ENCODE measurements at regions of chr2 and their contacts with region 1.

Region 1: GRCh38 chr2:31992025-31992566 is 18.7 kb downstream of the MEMO1 start:
- DNase-seq: no peak
- ATAC-seq: no peak
- H3K4me3 ChIP-seq: no peak overlapping the region
- H3K4me3 Mint-ChIP-seq: no peak overlapping the region
- H3K27ac ChIP-seq: no peak overlapping the region
- H3K27ac Mint-ChIP-seq: no peak overlapping the region
- H3K4me1 ChIP-seq: peaks cover 2 to 3% of the 10 kb centered on the region in 2 experiments
- H3K4me1 Mint-ChIP-seq: peaks cover 49 to 56% (median 56%) of the 10 kb centered on the region in 3 donors
- H3K27me3 ChIP-seq: no peaks in the 10 kb centered on the region
- H3K27me3 Mint-ChIP-seq: no peaks in the 10 kb centered on the region

Region 2: GRCh38 chr2:31973665-31974064 is 18.4 kb before region 1 on chr2:
- CTCF ChIA-PET with region 1: no interaction called
- POLR2A ChIA-PET with region 1: no interaction called
- DNase-seq: no peak
- ATAC-seq: no peak
- H3K4me3 ChIP-seq: no peak overlapping the region
- H3K4me3 Mint-ChIP-seq: no peak overlapping the region
- H3K27ac ChIP-seq: no peak overlapping the region
- H3K27ac Mint-ChIP-seq: no peak overlapping the region
- H3K4me1 ChIP-seq: no peaks in the 10 kb centered on the region
- H3K4me1 Mint-ChIP-seq: peaks cover 13 to 36% (median 31%) of the 10 kb centered on the region in 3 donors
- H3K27me3 ChIP-seq: no peaks in the 10 kb centered on the region
- H3K27me3 Mint-ChIP-seq: no peaks in the 10 kb centered on the region

Region 3: DNA sequence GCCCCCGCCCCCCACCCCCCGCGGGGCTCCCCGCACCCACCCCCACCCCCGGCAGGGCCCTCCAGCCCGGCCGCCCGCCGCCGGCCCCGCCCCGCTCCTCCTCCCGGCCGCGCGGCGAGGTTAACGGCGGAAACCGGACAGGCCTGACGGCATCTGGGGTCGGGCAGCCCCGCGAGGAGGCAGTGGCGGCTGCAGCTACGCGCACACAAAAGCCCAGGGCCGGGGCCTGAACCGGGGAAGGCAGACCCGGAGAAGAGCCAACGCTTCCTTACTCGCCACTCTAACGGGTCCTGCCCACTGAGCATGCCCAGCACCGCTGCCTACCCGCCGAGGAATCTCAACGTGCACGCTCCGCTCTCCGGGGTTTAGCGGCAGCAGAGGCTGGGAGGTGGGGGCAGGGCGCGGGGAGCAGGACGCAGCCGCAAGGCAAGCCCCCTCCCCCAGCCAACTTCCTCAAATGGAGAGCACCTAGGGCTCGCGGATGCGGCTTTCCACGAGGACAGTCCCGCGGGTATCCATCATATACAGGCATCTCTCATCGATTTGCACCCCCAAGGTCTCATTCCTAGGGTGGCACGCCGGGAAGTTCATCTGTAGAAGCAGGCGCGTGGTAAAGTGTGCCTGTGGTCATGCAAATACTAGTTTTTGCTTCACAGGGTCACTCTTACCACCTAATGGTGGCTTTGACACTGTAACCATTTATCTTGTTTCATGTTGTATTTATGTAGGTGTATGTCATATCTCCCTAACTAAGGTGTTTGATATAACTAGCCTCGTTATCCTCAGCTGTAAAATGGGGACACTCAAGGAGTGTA is 18.8 kb after region 1 on chr2 and contains the start of gene MEMO1:
- CTCF ChIA-PET with region 1: interaction called in 1 of 2 experiments, 3 read pairs
- POLR2A ChIA-PET with region 1: interaction called in 1 of 2 experiments, 12 read pairs
- DNase-seq: peak; percentile 83 to 95 (median 91)
- ATAC-seq: peak; percentile 72 to 78 (median 76)
- H3K4me3 ChIP-seq: peak within 1 kb of the TSS; percentile 66 to 79
- H3K4me3 Mint-ChIP-seq: peak within 1 kb of the TSS; percentile 83 to 90 (median 88)
- H3K27ac ChIP-seq: peak within 1 kb of the TSS; percentile 74
- H3K27ac Mint-ChIP-seq: peak within 1 kb of the TSS; percentile 94 to 95
- H3K4me1 ChIP-seq: peaks cover 8 to 27% of the 10 kb centered on the region in 2 experiments
- H3K4me1 Mint-ChIP-seq: peaks cover 39 to 49% (median 42%) of the 10 kb centered on the region in 3 donors
- H3K27me3 ChIP-seq: no peaks in the 10 kb centered on the region
- H3K27me3 Mint-ChIP-seq: no peaks in the 10 kb centered on the region
- total RNA-seq, gene MEMO1: 35.0 to 46.3 (median 41.5) TPM

Measured in T-cell (primary cell).